ENCODE measurements at regions of chr10 and their contacts with region 1.

Region 1: GRCh38 chr10:91298224-91298871 is 77.9 kb downstream of the PCGF5 start:
- DNase-seq: peak; percentile 68 to 74
- ATAC-seq: peak; percentile 84 to 92 (median 88)
- H3K4me3 ChIP-seq: peak overlapping the region in 9 of 10 donors; percentile 11 to 58 (median 49)
- H3K27ac ChIP-seq: peak overlapping the region in 1 of 10 donors; percentile 25
- H3K4me1 ChIP-seq: peaks cover 0 to 12% (median 6%) of the 10 kb centered on the region in 9 donors
- H3K27me3 ChIP-seq: peaks cover 0 to 6% (median 0%) of the 10 kb centered on the region in 7 donors
- CTCF ChIP-seq: peak; percentile 89 to 95 (median 92)

Region 2: GRCh38 chr10:91374052-91374451 is 75.7 kb after region 1 on chr10:
- intact Hi-C with region 1: loop called in 8 of 10 experiments (anchors 2 to 10 kb)
- DNase-seq: no peak
- ATAC-seq: no peak
- H3K4me3 ChIP-seq: no peak overlapping the region
- H3K27ac ChIP-seq: no peak overlapping the region
- H3K4me1 ChIP-seq: no peaks in the 10 kb centered on the region
- H3K27me3 ChIP-seq: peaks cover 0 to 11% (median 0%) of the 10 kb centered on the region in 7 donors
- CTCF ChIP-seq: no peak

Region 3: GRCh38 chr10:91389636-91390512 is 91.5 kb after region 1 on chr10:
- intact Hi-C with region 1: loop called in 2 of 10 experiments (anchors 5 to 10 kb)
- DNase-seq: peak in 1 of 2 donors; percentile 9
- ATAC-seq: peak in 7 of 8 donors; percentile 58 to 80 (median 71)
- H3K4me3 ChIP-seq: no peak overlapping the region
- H3K27ac ChIP-seq: no peak overlapping the region
- H3K4me1 ChIP-seq: peaks cover 0 to 4% (median 0%) of the 10 kb centered on the region in 9 donors
- H3K27me3 ChIP-seq: peaks cover 0 to 24% (median 0%) of the 10 kb centered on the region in 7 donors
- CTCF ChIP-seq: peak; percentile 37 to 82 (median 72)

Region 4: GRCh38 chr10:91551856-91552255 is 253.5 kb after region 1 on chr10:
- intact Hi-C with region 1: loop called in 6 of 10 experiments (anchors 5 to 10 kb)
- DNase-seq: peak; percentile 38 to 62
- ATAC-seq: peak; percentile 75 to 93 (median 86)
- H3K4me3 ChIP-seq: peak overlapping the region in 8 of 10 donors; percentile 3 to 44 (median 32)
- H3K27ac ChIP-seq: peak overlapping the region in 5 of 10 donors; percentile 23 to 55 (median 42)
- H3K4me1 ChIP-seq: peaks cover 0 to 24% (median 3%) of the 10 kb centered on the region in 9 donors
- H3K27me3 ChIP-seq: no peaks in the 10 kb centered on the region
- CTCF ChIP-seq: peak in 8 of 9 donors; percentile 36 to 84 (median 73)

Measured in heart right ventricle (tissue), 16 donors.